Mammary epithelial cell (primary cell): ENCODE measurements at regions of chr18 and their contacts with region 1.

Region 1: DNA sequence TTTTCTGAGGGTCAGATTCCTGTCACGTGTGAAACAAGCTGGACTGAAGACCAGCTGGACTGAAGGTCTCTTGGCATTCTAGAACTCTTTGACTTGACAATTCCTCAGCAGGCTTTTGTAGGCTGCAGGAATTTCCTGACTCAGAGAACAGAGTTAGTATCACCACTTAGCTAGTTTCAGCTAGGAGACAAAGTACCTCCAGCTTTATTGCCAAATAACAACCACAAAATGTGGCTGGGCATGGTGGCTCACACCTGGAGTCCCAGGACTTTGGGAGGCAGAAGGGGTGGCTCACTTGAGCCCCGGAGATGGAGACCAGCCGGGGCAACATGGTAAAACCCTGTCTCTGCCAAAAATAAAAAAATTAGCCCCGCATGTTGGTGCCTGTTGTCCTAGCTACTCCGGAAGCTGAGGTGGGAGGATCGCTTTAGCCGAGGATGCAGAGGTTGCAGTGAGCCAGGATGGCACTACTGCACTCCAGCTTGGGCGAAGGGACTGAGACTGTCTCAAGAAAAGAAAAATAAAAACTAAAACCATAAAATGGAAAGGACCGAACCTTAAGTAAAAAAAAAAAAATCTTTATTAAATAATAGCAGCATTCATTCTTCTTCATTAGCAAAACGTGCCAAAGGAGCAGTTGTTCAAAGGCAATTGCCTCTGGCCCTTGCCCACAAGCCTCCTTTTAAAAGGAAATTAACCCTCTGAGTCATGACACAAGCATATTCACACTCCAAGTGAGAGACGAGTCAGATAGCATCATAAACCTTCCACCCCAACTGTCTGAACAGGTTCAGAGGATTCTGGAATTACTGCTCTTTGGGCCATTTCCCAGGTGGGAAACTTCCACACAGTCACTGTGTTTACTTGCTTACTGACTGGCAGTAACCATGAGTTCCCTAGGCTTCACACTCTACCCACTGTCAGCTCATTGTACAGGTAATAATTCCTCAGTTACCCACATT is 88.9 kb downstream of the MYL12B start:
- DNase-seq: peak; percentile 98
- H3K4me3 ChIP-seq: no peak overlapping the region
- H3K27ac ChIP-seq: peak overlapping the region; percentile 94
- H3K4me1 ChIP-seq: peaks cover 29% of the 10 kb centered on the region
- H3K27me3 ChIP-seq: no peaks in the 10 kb centered on the region
- CTCF ChIP-seq: no peak

Region 2: DNA sequence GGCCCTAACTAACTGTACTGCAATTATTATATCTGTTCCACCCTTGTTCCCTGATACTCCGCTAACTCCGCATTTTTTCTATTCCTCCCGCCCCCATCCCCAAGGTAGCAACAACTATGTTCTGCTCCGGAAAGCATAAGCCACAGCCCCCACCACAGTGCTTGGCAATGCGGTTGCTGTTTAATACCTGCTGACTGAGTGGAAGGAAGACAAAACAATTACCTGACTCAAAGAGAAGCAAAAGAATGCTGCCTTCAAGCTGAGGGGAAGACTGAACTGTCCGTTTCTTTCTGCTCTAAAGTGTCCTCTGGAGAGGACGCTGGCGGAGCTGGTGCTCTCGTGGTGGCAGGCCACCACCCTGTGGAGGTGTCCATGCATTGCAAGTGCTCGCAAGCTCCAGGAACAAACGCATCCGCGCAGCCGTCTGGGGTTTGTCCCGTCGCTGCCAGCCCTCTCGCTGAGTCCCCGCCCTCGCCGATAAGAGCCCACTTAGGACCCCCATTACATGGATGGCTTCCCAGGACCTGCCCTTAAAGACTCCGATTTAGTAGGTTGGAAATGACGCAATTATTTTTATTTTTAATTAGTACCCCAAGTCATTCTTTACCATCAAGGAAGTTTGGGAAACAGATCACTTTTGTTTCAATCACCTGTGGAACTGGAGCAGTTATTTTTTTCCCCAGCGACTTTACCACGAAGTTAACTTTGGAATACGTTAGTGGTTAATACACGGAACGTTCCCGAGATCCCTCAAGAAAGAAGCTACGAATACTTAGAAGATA is 104.8 kb before region 1 on chr18:
- CTCF ChIA-PET with region 1: no interaction called
- dilution Hi-C with region 1: no loop called
- in situ Hi-C with region 1: no loop called
- intact Hi-C with region 1: no loop called
- DNase-seq: peak; percentile 85
- H3K4me3 ChIP-seq: peak overlapping the region; percentile 46 to 96 (median 48)
- H3K27ac ChIP-seq: peak overlapping the region; percentile 99
- H3K4me1 ChIP-seq: peaks cover 29% of the 10 kb centered on the region
- H3K27me3 ChIP-seq: no peaks in the 10 kb centered on the region
- CTCF ChIP-seq: peak; percentile 97 to 98

Region 3: DNA sequence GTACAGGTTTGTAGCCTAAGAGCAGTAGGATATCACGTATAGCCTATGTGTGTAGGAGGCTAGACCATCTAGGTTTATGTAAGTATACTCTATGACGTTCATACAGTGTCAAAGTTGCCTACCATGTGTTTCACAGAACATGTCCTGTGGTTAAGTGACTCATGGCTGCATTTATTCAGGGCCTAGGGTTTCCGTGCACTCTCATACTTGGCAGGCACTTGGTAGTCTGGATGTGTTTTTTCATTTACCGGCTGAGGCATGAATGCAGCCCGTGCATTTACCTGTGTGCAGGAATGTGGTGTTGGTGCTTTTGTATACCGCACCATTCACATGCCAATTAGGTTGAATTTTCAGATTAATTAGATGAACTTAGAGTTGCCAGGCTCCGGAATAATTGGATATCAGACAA is 45.5 kb before region 1 on chr18:
- CTCF ChIA-PET with region 1: no interaction called
- dilution Hi-C with region 1: no loop called
- in situ Hi-C with region 1: no loop called
- intact Hi-C with region 1: loop called (anchors 2 kb)
- DNase-seq: peak; percentile 98
- H3K4me3 ChIP-seq: peak overlapping the region in 2 of 3 experiments; percentile 4 to 23
- H3K27ac ChIP-seq: peak overlapping the region; percentile 96
- H3K4me1 ChIP-seq: peaks cover 23% of the 10 kb centered on the region
- H3K27me3 ChIP-seq: no peaks in the 10 kb centered on the region
- CTCF ChIP-seq: no peak

Region 4: GRCh38 chr18:3368193-3368592 is 17.3 kb after region 1 on chr18:
- CTCF ChIA-PET with region 1: no interaction called
- dilution Hi-C with region 1: no loop called
- in situ Hi-C with region 1: no loop called
- intact Hi-C with region 1: loop called (anchors 1 kb)
- DNase-seq: peak; percentile 86
- H3K4me3 ChIP-seq: peak overlapping the region in 2 of 3 experiments; percentile 8 to 18
- H3K27ac ChIP-seq: peak overlapping the region; percentile 97
- H3K4me1 ChIP-seq: peaks cover 25% of the 10 kb centered on the region
- H3K27me3 ChIP-seq: no peaks in the 10 kb centered on the region
- CTCF ChIP-seq: no peak